ENCODE measurements at regions of chr2 and their contacts with region 1.

Region 1: GRCh38 chr2:226791487-226792081 is 8.0 kb downstream of the IRS1 start:
- DNase-seq: peak; percentile 92 to 95 (median 95)
- ATAC-seq: peak; percentile 98
- H3K4me3 ChIP-seq: peak overlapping the region; percentile 38
- H3K4me1 ChIP-seq: peaks cover 19% of the 10 kb centered on the region
- CTCF ChIP-seq: peak; percentile 29

Region 2: DNA sequence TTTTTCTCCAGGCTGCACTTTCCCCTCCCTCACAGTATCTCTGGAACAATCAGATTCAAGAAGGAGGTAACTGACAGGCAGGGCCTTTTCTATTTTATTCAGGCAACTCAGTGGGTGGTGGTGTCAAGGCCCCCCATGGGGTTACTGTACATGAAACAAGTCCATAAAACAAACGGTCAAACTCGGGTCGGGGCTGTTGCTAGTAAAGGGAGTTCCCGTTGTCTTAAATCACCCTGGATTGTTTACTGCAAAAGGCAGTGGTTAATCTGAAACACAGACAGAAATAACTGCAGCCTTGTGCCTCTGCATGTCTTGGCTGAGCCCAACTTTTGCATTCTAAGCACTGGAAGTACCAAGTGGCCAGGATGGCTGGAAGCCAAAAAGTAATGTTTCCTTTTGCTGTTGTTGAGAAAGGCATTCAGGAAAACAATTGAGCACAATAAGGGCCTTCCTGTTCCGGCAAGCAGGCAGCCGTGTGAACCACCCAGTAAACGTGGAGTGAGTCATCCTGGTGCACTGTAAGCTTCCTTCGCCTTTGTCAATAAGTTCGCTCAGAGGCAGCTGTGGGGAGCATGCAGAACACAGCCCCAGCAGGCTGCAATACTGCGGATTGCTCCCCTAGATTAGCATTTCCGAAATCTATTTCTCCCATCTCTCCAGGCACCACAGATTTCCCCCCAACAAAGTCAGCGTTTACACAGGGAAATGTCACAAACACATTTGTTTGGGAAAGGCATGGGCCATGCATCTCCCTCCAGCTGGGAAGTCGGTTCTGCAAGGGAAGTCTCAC is 141.5 kb before region 1 on chr2:
- intact Hi-C with region 1: loop called in 1 of 2 experiments (anchors 10 kb)
- DNase-seq: peak; percentile 70 to 81 (median 80)
- ATAC-seq: peak; percentile 98
- H3K4me3 ChIP-seq: no peak overlapping the region
- H3K4me1 ChIP-seq: peaks cover 11% of the 10 kb centered on the region
- CTCF ChIP-seq: no peak

Region 3: GRCh38 chr2:226733189-226733858 is 58.3 kb before region 1 on chr2:
- intact Hi-C with region 1: loop called in 1 of 2 experiments (anchors 10 kb)
- DNase-seq: no peak
- ATAC-seq: no peak
- H3K4me3 ChIP-seq: no peak overlapping the region
- H3K4me1 ChIP-seq: no peaks in the 10 kb centered on the region
- CTCF ChIP-seq: no peak

Region 4: DNA sequence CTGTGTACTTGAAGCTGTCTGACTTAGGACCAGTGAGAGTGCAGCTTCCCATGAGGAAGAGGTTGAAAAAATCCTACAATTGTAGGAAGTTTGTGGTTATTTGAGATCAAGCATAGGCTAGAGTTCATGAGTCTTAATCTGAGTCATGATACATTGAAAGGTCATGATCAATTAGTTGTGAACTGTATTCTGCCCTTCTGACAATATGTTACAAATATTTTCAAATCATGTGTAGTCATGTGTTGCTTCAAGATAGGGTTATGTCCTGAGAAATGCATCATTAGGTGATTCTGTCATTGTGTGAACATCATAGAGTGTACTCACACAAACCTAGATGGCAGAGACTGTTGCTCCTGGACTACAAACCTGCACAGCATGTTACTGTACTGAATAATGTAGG is 465.0 kb after region 1 on chr2:
- intact Hi-C with region 1: no loop called
- DNase-seq: no peak
- ATAC-seq: no peak
- H3K4me3 ChIP-seq: no peak overlapping the region
- H3K4me1 ChIP-seq: no peaks in the 10 kb centered on the region
- CTCF ChIP-seq: no peak